AG04449 (cell line): ENCODE measurements at regions of chr17 and their contacts with region 1.

Region 1: DNA sequence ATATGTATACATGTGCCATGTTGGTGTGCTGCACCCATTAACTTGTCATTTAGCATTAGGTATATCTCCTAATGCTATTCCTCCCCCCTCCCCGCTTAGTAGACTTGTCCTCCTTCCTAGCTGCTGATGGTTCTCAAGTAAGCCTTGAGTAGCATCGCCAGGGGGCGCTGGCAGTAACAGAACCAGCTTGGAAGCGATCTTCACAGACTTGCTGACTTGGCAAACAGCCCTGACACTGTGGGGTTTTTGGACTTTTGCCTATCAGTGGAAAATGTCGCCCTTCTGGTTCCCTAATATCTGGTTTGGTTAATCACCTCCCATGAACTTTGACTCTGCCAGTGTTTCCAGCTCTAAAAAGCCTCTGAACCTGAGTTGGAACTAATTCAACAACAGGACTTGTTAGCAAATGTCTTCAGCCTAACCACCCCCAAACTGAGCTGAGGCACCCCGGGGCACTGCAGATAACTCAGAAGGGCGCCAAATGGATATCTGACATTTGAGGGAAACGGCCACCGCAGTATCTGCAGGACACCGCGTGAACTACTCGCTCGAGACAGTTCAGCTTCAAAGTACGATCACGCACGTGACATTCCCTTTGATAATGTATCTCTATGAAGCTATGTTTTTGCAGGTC is 15.4 kb upstream of the SPATA32 start:
- DNase-seq: peak; percentile 56
- H3K4me3 ChIP-seq: no peak overlapping the region
- CTCF ChIP-seq: peak; percentile 90

Region 2: DNA sequence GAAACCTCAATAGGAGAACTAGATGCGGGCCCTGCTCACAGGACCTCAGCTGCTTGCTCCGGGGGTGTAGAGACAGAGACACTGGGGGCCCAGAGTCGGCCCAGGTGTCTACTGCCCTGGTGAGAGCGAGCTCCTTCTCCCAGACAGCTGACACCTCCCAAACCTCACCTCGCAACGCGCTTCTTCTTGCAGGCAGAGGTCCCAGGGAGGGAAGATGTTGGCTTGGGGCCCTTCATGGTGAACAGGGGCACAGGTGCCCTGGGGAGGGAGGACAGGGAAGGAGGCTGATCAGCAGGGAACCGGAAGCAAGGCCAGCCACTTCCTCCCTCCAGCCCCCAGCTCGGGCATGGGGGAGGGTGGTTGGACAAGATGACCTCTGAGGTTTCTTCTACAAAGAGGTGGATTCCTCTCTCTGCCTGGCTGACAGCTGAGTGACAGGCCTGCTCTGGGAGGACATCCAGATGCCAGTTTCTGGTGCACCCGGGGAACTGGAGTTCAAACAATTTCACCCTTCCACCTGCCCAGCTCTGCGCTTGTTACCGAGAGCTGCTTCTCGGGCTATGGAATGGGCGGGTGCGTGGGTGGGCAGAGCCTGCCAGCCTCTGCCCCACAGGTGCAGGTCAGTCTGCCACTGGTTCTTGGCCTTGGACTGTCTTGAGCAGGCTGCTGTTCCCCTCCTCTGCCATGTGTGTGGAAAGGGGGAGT is 350.4 kb before region 1 on chr17:
- CTCF ChIA-PET with region 1: no interaction called
- POLR2A ChIA-PET with region 1: no interaction called
- DNase-seq: no peak
- H3K4me3 ChIP-seq: no peak overlapping the region
- CTCF ChIP-seq: no peak

Region 3: DNA sequence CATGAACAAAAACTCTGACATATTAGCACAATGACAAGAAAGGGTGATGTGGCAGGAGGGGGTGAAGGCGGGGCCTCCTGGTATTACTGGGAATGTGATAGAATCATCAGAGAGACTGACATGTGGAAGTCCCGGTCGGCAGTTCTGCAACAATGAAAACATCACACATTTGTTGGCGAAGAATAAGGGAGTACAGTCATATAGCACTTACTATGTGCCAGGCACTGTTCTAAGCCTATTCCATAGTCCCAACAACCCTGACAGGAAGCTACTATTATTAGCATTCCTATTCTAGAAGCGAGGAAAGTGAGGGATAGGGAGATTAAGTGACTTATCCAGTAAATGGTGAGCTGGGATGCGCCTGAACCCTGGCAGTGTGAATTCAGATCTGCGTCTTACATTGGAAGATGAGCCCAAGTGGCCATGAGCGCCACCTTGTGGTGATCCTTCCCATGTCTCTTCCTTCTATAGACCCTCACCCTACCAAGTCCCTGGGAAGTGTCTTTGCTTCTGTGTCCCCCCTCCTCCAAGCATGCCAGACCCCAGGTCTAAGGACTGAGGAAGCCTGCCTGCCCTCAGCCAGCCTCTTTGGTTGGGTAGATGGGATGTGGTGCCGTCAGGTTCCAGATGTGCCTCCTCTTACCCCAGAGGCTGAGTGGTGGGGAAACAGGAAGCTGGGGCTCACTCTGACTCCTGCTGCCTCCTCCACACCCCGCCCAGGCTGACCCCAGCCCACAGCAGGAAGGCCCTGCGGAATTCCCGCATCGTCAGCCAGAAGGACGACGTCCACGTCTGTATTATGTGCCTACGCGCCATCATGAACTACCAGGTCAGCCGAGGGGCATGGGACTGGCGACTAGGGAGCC is 41.7 kb before region 1 on chr17:
- CTCF ChIA-PET with region 1: interaction called, 19 read pairs
- POLR2A ChIA-PET with region 1: no interaction called
- DNase-seq: peak; percentile 9
- H3K4me3 ChIP-seq: no peak overlapping the region
- CTCF ChIP-seq: peak; percentile 87

Region 4: DNA sequence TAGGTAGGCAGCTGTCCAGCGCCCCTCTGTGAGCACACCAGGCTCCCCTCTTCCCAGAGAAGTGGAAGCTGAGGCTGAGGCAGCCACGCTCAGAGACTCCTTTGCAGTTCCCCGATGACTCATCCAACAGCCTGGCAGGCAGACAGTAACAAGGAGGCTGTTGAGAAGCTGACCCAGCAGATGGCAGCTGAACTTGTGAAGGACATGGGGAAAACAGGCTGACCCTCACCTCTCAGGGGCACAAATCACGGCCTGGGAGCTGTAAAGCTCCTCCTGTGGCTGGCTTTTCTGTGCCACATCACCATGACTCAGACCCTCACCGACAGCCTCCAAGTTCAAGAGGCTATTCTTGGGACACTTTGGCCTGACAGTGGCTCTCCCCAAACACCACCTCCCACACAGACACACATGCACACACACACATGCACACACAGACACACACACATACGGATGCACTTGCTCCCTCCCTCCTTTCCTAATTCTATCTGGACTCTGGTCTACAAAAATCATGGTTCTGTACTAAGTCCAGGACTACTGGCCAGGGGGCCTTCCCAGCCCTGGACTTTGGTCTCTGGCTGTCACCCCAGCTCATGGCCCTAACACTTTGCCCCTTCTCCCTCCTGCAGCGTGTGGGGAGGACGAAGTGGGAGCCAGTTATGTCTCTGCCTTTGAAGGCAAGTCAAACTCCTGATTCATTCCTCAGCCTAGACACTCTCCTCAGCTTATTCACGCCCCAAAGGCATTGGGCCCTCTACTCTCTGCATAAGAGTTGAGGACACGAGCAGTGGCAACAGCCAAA is 16.3 kb after region 1 on chr17:
- CTCF ChIA-PET with region 1: interaction called, 144 read pairs
- POLR2A ChIA-PET with region 1: interaction called, 3 read pairs
- DNase-seq: no peak
- H3K4me3 ChIP-seq: no peak overlapping the region
- CTCF ChIP-seq: peak; percentile 30

Region 5: GRCh38 chr17:45311760-45312476 is 34.6 kb after region 1 on chr17:
- CTCF ChIA-PET with region 1: interaction called, 29 read pairs
- POLR2A ChIA-PET with region 1: no interaction called
- DNase-seq: no peak
- H3K4me3 ChIP-seq: no peak overlapping the region
- CTCF ChIP-seq: no peak

Region 6: DNA sequence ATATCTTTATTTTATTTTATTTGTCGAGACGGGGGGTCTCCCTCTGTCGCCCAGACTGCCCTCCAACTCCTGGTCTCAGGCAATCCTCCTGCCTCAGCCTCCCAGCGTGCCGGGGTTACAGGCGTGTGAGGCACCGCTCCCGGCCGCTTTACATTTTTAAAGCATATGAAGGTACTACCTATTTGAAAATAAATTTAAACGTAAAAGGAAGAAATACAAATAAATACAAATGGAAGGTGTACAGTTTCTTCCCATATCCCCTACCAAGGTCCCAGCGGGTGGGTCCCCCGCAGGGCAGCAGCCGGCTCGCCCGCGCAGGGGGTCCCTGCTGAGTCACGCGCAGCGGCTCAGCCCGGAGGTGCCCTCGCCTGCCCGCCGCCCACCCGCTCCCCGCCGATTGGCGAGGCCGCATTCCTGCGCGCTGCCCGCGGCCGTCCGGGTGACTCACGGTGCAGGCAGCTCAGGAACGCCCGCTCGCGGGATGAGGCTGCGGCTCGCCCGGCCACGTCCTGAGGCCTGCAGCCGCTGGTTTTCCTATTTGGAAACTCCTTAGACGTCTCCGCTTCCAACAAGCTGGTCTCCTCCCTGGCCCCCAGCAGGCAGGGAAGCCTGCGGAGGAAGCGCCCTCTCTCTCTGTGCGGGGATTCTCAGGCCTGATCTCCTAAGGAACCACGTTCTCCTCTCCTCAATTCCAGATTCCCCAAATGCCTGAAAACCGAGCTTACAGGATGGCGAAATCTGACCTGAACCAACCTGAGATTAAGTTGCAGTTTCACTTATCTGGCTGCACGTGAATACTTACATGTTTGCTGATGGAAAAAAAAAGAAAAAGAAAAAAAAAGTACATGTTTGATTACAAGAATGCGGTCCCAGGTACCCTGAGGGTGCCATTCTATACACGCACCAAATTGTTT is 94.3 kb after region 1 on chr17:
- CTCF ChIA-PET with region 1: interaction called, 20 read pairs
- POLR2A ChIA-PET with region 1: interaction called, 5 read pairs
- DNase-seq: peak; percentile 94
- H3K4me3 ChIP-seq: peak overlapping the region; percentile 18; the same call in 1 of the 2 replicates
- CTCF ChIP-seq: peak; percentile 22